Activated T-helper 1 cell treated with anti-CD3 and anti-CD28 coated beads, Interleukin-12 subunit alpha, Interleukin-12 subunit beta, Interleukin-2, Interleukin-4 antibody, amounts not matched to agents 30 ng/mL and 10 ng/mL and 1 ng/mL, durations not matched to agents 14 hours and 24 hours and 36 hours (primary cell): ENCODE measurements at regions of chr12 and their contacts with region 1.

Region 1: DNA sequence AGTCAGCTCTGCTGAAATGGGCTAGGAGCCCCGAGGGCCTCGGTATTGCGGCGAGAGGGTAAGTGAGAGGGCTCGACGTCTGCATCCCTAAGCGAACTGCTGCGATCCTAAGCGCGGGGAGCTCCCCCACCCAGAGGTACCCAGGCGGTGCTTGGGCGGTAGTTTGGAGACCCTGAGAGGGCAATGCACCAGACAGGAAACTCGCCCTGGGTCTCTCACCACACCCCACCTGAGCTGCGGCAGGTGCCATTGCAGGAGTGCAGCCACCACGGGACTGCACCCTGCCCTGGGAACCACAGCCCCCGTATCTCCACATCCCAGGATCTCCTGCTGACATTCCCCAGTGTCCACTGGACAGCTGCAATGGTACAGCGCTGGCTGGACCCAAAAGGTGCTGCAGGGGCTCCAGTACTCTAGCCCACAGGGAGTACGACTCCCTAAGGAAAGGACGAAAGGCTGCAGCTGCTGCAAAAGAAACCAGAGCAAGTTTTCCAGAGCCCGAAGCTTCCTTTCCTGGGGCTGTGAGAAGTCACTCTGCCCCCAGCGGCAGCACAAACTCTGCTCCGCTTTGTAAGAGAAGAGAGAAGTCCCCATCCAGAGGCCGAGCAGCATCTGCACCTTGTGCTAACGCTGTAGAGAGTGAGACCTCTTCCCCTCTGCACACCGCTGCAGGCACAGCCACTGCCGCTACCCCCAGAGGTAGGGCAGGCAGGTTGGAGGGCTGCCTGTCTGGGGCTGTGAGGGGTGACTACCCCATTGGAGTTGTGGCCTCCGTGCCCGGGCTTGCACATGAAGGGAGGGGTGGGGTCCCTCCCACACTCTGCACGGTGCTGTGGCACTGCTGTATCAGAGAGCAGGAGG is 31.1 kb upstream of the MON2 start:
- DNase-seq: peak; percentile 8
- H3K4me3 Mint-ChIP-seq: peak overlapping the region; percentile 80
- H3K27ac Mint-ChIP-seq: no peak overlapping the region
- H3K4me1 Mint-ChIP-seq: peaks cover 24% of the 10 kb centered on the region
- H3K27me3 Mint-ChIP-seq: peaks cover 56% of the 10 kb centered on the region

Region 2: GRCh38 chr12:62181481-62181880 is 254.1 kb before region 1 on chr12:
- intact Hi-C with region 1: no loop called
- DNase-seq: no peak
- H3K4me3 Mint-ChIP-seq: no peak overlapping the region
- H3K27ac Mint-ChIP-seq: no peak overlapping the region
- H3K4me1 Mint-ChIP-seq: no peaks in the 10 kb centered on the region
- H3K27me3 Mint-ChIP-seq: peaks cover 29% of the 10 kb centered on the region

Region 3: DNA sequence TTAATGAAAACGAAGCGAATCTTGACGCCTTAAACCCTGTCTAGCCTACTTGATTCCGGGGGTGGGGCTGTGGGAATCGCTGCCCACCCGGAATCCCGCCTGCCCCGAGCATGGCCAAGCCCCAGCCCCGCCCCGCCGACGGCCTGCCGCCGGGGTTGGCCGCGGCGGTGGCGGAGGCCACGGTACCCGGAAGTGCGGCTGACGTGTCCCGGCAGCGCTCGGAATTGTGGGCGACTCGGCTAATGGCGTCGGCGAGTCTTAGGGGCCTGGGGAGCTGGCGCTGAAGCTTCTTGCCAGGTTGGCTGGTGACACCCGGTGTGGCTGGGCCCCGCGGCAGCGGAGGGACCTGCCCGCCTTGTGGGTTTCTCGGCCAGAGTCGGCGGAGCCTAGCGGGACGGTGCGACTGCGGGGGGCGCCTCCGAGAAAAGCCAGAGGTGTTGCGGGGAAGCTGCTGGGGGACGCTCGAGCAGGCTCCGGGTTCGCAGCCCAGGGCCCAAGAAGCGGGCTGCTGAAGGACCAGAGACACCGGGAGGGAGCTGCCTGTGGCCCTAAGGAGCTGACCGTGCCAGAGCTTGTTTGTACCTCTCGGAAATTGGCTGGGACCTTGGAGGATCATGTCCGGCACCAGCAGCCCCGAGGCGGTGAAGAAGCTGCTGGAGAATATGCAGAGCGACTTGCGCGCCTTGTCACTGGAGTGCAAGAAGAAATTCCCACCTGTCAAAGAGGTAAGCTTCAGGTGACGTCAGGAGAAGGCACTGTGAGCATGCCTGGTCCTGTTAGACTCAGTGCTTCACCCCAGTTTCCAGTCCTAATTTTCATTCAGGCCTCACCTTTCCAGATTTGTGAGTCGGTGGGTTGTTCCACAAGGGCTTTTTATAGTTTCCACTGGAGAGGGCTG is 31.3 kb after region 1 on chr12 and contains the start of gene MON2:
- intact Hi-C with region 1: loop called (anchors 2 kb)
- DNase-seq: peak; percentile 86
- H3K4me3 Mint-ChIP-seq: peak within 1 kb of the TSS; percentile 91
- H3K27ac Mint-ChIP-seq: peak within 1 kb of the TSS; percentile 92
- H3K4me1 Mint-ChIP-seq: peaks cover 28% of the 10 kb centered on the region
- H3K27me3 Mint-ChIP-seq: no peaks in the 10 kb centered on the region
- total RNA-seq, gene MON2: 33.1 and 40.8 TPM in 2 replicates

Region 4: GRCh38 chr12:62522984-62523383 is 87.5 kb after region 1 on chr12:
- intact Hi-C with region 1: loop called (anchors 5 kb)
- DNase-seq: no peak
- H3K4me3 Mint-ChIP-seq: no peak overlapping the region
- H3K27ac Mint-ChIP-seq: peak overlapping the region; percentile 31
- H3K4me1 Mint-ChIP-seq: peaks cover 14% of the 10 kb centered on the region
- H3K27me3 Mint-ChIP-seq: no peaks in the 10 kb centered on the region

Region 5: GRCh38 chr12:62581288-62582064 is 145.9 kb after region 1 on chr12:
- intact Hi-C with region 1: loop called (anchors 2 kb)
- DNase-seq: no peak
- H3K4me3 Mint-ChIP-seq: no peak overlapping the region
- H3K27ac Mint-ChIP-seq: no peak overlapping the region
- H3K4me1 Mint-ChIP-seq: no peaks in the 10 kb centered on the region
- H3K27me3 Mint-ChIP-seq: no peaks in the 10 kb centered on the region

Region 6: GRCh38 chr12:62793256-62794217 is 358.0 kb after region 1 on chr12:
- intact Hi-C with region 1: loop called (anchors 1 kb)
- DNase-seq: peak; percentile 40
- H3K4me3 Mint-ChIP-seq: no peak overlapping the region
- H3K27ac Mint-ChIP-seq: no peak overlapping the region
- H3K4me1 Mint-ChIP-seq: no peaks in the 10 kb centered on the region
- H3K27me3 Mint-ChIP-seq: peaks cover 12% of the 10 kb centered on the region

Region 7: DNA sequence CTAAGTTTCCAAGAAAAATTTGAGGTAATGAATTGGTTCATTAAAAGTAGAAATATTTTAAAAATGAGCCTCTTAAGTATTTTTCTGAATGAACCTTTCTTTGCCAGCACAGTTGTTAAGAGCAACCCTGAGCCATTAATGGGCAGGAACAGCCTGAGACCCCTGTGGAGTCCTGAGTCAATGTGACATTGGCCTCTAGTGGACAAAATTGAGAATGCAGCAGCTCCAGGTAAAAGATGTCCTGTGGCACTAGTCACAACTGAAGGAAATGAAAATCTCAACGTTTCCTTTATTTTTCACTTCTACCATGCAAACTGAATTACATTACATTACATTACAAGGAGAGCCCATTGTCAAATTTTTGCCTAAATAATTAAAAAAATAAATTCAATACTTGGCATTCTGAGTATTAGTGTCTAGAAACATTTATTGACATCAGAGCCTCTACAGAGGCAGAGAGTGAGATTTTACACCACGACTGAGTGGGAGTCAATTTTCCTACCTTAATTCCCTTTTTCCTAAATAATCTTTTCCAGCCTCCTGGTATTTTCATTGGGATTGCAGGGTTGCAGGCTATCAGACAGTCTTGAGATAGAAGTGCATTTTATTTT is 363.7 kb after region 1 on chr12:
- intact Hi-C with region 1: loop called (anchors 1 kb)
- DNase-seq: peak; percentile 42
- H3K4me3 Mint-ChIP-seq: no peak overlapping the region
- H3K27ac Mint-ChIP-seq: no peak overlapping the region
- H3K4me1 Mint-ChIP-seq: no peaks in the 10 kb centered on the region
- H3K27me3 Mint-ChIP-seq: peaks cover 8% of the 10 kb centered on the region

Region 8: GRCh38 chr12:62813031-62813829 is 377.7 kb after region 1 on chr12:
- intact Hi-C with region 1: loop called (anchors 5 kb)
- DNase-seq: peak; percentile 7
- H3K4me3 Mint-ChIP-seq: no peak overlapping the region
- H3K27ac Mint-ChIP-seq: no peak overlapping the region
- H3K4me1 Mint-ChIP-seq: peaks cover 22% of the 10 kb centered on the region
- H3K27me3 Mint-ChIP-seq: peaks cover 25% of the 10 kb centered on the region